WTC11 (cell line): ENCODE measurements at regions of chr3 and their contacts with region 1.

Region 1: GRCh38 chr3:126212602-126213378 is 32.4 kb upstream of the ALDH1L1 start:
- DNase-seq: peak; percentile 84
- ATAC-seq: peak; percentile 83
- H3K4me3 Mint-ChIP-seq: peak overlapping the region; percentile 84
- H3K27ac Mint-ChIP-seq: peak overlapping the region; percentile 91; the same call in 1 of the 2 replicates
- H3K4me1 Mint-ChIP-seq: peaks cover 21% of the 10 kb centered on the region
- H3K27me3 Mint-ChIP-seq: peaks cover 61% of the 10 kb centered on the region
- CTCF ChIP-seq: no peak

Region 2: DNA sequence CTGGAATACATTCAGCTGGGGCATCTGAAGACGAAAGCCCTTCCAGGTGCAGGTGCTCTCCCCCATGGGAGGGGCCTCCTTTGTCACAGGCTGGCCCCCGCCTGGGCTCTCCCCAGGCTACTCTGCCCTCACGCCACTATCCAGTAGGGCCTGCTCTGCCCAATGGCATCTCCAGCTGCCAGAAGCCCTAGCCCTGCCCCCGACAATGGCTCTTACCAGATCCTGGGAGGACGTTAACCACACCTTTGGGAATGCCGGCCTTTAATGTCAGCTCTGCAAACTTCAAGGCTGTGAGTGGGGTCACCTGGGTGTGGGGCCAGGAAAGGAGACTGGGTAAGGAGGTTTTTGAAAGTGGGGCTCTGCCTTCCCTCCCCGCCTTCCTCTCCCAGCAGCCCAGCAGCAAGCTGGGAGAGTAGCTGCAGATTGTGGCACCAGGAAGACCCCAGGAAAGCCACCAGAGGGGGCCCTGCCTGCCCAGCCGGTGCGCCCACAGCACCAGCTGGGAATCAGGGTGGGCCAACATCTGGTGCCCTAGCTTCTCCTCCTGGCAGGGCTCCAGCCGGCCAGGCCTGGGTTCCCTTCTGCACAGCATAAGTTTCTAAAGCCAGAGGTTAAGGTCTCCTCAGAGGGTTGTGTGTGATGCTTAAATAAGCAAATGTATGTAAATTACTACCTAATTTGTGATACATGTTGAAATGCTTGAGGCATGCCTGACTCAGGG is 88.5 kb before region 1 on chr3:
- CTCF ChIA-PET with region 1: interaction called, 10 read pairs
- POLR2A ChIA-PET with region 1: no interaction called
- DNase-seq: peak; percentile 49
- ATAC-seq: peak; percentile 79
- H3K4me3 Mint-ChIP-seq: no peak overlapping the region
- H3K27ac Mint-ChIP-seq: no peak overlapping the region
- H3K4me1 Mint-ChIP-seq: peaks cover 14% of the 10 kb centered on the region
- H3K27me3 Mint-ChIP-seq: no peaks in the 10 kb centered on the region
- CTCF ChIP-seq: no peak

Region 3: GRCh38 chr3:126180477-126181397 is 32.1 kb before region 1 on chr3 and contains the start of gene ALDH1L1:
- CTCF ChIA-PET with region 1: interaction called, 12 read pairs
- POLR2A ChIA-PET with region 1: interaction called, 3 read pairs
- DNase-seq: peak; percentile 77
- ATAC-seq: peak; percentile 81
- H3K4me3 Mint-ChIP-seq: peak within 1 kb of the TSS; percentile 78
- H3K27ac Mint-ChIP-seq: no peak within 1 kb of the TSS
- H3K4me1 Mint-ChIP-seq: peaks cover 16% of the 10 kb centered on the region
- H3K27me3 Mint-ChIP-seq: peaks cover 56% of the 10 kb centered on the region
- CTCF ChIP-seq: no peak
- total RNA-seq, gene ALDH1L1: 0.78 to 2.0 TPM (median 1.2 TPM) in 3 replicates

Region 4: DNA sequence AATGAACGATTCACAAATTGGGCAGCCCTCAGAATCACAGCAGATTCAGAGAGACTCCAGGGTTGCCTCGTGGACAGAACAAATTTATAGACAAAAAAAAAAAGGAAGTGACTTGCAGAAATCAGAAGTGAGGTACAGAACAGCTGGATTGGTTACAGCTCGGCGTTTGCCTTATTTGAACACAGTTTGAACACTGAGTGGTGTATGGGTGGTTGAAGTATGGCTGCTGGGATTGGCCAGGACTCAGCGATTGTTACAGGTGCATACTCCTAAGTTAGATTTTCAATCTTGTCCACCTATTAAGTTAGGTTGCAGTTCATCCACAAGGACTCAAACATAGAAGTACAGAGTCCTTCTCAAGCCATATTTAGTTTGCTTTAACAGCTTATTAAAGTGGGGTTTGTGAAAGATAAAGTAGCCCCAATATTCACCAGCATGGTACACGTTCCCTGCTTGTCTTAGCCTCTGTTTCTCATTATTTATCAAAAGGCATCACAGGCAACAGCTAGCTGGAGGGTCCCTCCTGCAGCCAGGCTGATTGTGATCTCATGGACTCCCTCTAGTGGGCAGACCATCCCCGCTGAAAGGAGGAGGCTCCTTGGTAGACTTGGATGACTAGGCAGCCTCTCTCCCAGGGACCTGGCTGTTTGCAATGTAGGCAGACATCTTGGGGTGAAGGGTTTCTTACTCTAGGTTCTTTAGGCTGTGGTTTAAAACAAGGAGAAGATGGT is 14.8 kb before region 1 on chr3:
- CTCF ChIA-PET with region 1: interaction called, 22 read pairs
- POLR2A ChIA-PET with region 1: no interaction called
- DNase-seq: peak; percentile 80
- ATAC-seq: peak; percentile 97
- H3K4me3 Mint-ChIP-seq: no peak overlapping the region
- H3K27ac Mint-ChIP-seq: no peak overlapping the region
- H3K4me1 Mint-ChIP-seq: peaks cover 6% of the 10 kb centered on the region; the same call in 1 of the 2 replicates
- H3K27me3 Mint-ChIP-seq: peaks cover 10% of the 10 kb centered on the region; the same call in 1 of the 2 replicates
- CTCF ChIP-seq: peak; percentile 45

Region 5: GRCh38 chr3:126340081-126340511 is 127.3 kb after region 1 on chr3:
- CTCF ChIA-PET with region 1: no interaction called
- POLR2A ChIA-PET with region 1: no interaction called
- DNase-seq: peak; percentile 6
- ATAC-seq: no peak
- H3K4me3 Mint-ChIP-seq: no peak overlapping the region
- H3K27ac Mint-ChIP-seq: no peak overlapping the region
- H3K4me1 Mint-ChIP-seq: peaks cover 5% of the 10 kb centered on the region; the same call in 1 of the 2 replicates
- H3K27me3 Mint-ChIP-seq: no peaks in the 10 kb centered on the region
- CTCF ChIP-seq: no peak